ENCODE measurements at regions of chr14 and their contacts with region 1.

Region 1: DNA sequence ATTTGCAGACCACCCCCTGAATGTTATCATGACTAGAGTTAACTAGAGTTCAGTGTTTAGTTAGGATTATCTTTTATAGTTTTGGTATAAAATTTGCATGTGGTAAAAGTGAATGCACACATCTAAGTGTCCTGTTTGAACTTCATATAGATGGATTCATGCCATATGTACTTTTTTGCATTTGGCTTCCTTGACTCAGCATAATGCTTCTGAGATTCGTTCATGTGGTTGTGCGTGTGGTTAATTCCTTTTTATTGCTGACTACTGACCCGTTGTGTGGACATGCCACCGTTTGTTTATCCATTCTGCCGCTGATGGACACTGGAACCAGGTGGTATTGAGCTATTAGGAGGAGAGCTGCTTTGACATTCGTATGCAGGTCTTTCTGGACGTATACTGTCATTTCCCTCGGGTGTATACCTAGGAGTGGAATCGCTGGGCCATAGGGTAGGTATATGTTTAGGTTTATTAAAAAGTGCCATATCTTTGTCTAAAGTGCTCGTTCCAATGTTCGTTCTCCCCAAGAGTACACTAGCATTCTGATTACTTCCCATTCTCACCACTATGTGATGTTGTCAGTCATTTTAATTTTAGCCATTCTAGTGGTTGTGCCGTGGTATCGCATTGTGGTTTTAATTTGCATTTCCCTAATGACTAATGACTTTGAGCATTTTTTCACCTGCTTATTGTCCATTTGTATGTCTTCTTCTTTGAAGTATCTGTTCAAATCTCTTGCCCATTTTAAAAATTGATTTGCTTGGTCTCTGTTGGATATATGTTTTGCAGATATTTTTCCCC is 37.7 kb downstream of the RIN3 start:
- DNase-seq: peak; percentile 78
- ATAC-seq: peak; percentile 74
- H3K4me3 ChIP-seq: no peak overlapping the region
- H3K4me3 Mint-ChIP-seq: peak overlapping the region; percentile 38
- H3K27ac ChIP-seq: no peak overlapping the region
- H3K27ac Mint-ChIP-seq: no peak overlapping the region
- H3K4me1 ChIP-seq: peaks cover 36 to 38% of the 10 kb centered on the region in 2 donors
- H3K4me1 Mint-ChIP-seq: peaks cover 38% of the 10 kb centered on the region
- H3K27me3 ChIP-seq: peaks cover 0 to 17% (median 6%) of the 10 kb centered on the region in 4 experiments
- H3K27me3 Mint-ChIP-seq: peaks cover 29% of the 10 kb centered on the region
- CTCF ChIP-seq: peak; percentile 76

Region 2: DNA sequence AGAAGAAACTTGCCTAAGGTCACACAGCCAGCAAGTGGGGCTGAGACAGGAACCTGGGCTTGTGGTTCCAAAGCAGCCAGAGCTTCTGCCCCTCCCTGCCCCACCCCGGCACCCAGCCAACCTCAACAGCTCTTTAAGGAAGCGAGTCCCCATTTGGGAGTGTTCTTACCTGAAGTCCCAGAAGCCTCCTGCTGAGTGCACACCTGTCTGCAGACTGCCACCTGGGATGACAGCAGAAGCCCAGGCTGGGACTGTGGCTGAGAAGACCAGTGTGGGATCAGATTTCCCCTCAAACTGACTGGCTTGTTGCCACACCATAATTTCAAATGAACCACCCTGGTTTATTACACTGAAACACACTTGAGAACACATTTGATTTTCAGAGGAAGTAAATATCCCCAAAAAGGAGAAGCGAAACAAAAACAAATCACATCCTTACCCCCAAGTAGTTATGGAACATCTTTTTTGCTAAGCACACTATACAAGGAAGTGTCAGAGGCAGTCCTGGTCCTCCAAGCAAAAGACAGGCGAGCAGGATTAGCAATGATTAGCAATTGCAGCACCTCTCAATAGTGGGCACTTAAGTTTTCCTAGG is 44.0 kb before region 1 on chr14:
- CTCF ChIA-PET with region 1: no interaction called
- POLR2A ChIA-PET with region 1: no interaction called
- intact Hi-C with region 1: loop called (anchors 2 kb)
- DNase-seq: peak; percentile 84
- ATAC-seq: peak; percentile 77
- H3K4me3 ChIP-seq: peak overlapping the region in 4 of 5 experiments; percentile 5 to 53 (median 14)
- H3K4me3 Mint-ChIP-seq: peak overlapping the region; percentile 46
- H3K27ac ChIP-seq: peak overlapping the region; percentile 59 to 70
- H3K27ac Mint-ChIP-seq: peak overlapping the region; percentile 80
- H3K4me1 ChIP-seq: peaks cover 37 to 55% of the 10 kb centered on the region in 2 donors
- H3K4me1 Mint-ChIP-seq: peaks cover 62% of the 10 kb centered on the region
- H3K27me3 ChIP-seq: no peaks in the 10 kb centered on the region
- H3K27me3 Mint-ChIP-seq: no peaks in the 10 kb centered on the region
- CTCF ChIP-seq: no peak

Region 3: DNA sequence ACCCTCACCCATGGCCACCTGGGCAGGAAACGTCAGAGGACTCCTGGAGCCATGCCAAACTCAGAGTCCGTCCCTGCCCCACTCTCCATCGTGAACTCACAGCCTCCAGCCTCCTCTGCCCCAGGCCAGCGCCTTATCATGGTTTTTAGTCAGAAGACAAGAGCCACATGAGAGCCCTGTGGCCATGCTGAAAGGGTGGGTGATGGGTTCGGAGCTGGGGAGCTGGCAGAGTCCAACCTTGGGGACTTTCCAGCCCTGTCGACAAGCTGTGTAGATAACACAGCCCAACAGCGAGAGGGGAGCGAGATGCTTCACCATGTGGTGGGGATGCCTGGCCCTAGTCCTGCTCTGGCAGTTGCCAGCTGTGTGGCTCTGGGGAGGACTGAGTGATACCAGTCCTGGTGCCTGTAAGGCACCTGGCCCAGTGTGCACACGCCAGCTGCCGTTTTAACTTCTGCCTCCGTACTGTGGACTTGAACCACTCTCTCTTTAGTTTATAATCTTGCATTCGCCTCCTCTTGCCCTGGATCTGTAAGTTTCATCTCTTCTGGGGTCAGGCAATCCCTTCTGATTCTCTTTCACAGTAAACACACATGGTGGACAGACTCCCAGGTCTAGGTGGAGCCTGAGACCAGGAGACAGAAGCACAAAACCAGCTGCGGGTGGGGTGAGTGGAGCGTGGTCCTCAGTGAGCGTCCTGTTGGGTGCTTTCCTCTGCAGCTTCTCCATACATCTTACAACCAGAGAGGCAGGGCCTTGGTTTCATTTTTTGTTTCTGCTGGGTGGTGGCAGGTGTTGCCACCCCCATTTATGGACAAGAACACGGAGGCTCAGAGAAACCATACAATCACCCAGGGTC is 17.6 kb after region 1 on chr14:
- CTCF ChIA-PET with region 1: interaction called, 5 read pairs
- POLR2A ChIA-PET with region 1: interaction called, 4 read pairs
- intact Hi-C with region 1: loop called (anchors 1 kb)
- DNase-seq: peak; percentile 82
- ATAC-seq: peak; percentile 80
- H3K4me3 ChIP-seq: peak overlapping the region in 3 of 5 experiments; percentile 4 to 22 (median 16)
- H3K4me3 Mint-ChIP-seq: peak overlapping the region; percentile 77
- H3K27ac ChIP-seq: peak overlapping the region; percentile 90 to 94
- H3K27ac Mint-ChIP-seq: peak overlapping the region; percentile 94
- H3K4me1 ChIP-seq: peaks cover 27 to 32% of the 10 kb centered on the region in 2 donors
- H3K4me1 Mint-ChIP-seq: peaks cover 41% of the 10 kb centered on the region
- H3K27me3 ChIP-seq: no peaks in the 10 kb centered on the region
- H3K27me3 Mint-ChIP-seq: no peaks in the 10 kb centered on the region
- CTCF ChIP-seq: no peak

Region 4: DNA sequence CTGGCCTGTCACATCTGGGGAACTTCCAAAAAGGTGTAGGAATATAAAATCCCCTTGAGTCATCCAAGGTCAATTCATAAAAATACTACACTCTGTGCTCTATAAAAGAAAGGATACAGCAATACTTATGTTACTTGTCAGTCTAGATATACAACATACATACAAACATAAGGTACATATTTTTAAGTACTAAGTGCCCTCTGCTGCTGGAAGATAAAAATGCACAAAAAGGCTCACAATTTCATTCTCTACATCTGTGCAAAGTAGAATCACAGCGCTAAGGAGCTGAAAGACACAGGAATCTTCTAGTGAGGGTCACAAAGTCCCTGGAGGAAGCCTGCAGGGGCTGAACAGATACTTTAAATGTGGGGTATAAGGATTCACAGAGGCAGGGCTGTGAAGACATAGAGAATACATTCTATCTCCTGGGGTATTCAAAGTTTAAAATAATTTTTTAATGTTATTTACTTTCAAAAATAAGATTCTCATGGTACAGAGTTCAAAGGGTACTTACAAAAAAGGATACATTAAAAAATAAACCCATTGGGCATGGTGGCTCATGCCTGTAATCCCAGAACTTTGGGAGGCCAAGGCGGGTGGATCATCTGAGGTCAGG is 232.7 kb after region 1 on chr14:
- CTCF ChIA-PET with region 1: interaction called, 4 read pairs
- POLR2A ChIA-PET with region 1: no interaction called
- intact Hi-C with region 1: loop called (anchors 10 kb)
- DNase-seq: peak; percentile 80
- ATAC-seq: peak; percentile 77
- H3K4me3 ChIP-seq: no peak overlapping the region
- H3K4me3 Mint-ChIP-seq: no peak overlapping the region
- H3K27ac ChIP-seq: no peak overlapping the region
- H3K27ac Mint-ChIP-seq: no peak overlapping the region
- H3K4me1 ChIP-seq: peaks cover 3 to 6% of the 10 kb centered on the region in 2 donors
- H3K4me1 Mint-ChIP-seq: peaks cover 15% of the 10 kb centered on the region
- H3K27me3 ChIP-seq: no peaks in the 10 kb centered on the region
- H3K27me3 Mint-ChIP-seq: no peaks in the 10 kb centered on the region
- CTCF ChIP-seq: peak; percentile 83

Measured in B cell (primary cell).